Right cardiac atrium (tissue), 5 donors: ENCODE measurements at regions of chr11 and their contacts with region 1.

Region 1: DNA sequence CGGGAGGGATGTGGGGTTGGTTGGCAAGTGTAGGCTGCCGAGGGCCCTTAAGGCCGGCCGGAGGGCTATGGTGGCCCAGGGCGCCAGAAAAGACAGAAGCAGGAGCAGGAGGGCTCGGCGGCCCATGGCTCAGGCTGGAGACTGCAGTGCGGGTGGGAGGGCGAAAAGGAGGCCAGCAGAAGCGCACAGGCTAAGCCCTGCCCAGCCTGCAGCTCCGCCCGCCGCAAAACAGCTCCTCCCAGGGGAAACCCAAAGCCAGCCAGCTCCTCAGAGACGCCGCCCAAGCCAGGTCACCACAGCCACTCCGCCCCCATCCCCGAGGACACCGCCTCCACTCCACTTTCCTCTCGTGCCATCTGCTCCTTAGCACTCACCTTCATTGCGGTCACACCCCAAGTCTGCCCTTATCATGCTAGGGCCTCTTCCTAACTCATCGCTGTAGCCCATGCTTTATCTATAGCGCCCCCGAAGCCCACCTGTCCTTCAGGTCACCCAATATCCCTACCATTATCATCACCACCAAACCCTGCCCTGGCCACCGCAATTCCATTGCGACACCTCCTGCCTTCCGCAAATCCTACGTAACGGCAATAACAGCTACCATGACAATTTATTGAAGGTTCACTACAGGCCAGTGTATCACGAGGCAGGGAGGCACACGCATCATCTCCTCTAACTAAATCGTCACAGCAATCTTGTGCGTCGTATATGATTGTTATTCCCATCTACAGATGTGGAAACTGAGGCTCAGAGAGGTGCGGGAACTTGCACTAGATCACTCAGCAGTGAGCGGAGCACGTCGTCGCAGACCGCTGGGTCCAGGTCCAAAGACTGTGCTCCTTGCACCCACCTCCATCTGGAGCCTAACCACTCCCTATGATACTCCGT is at the start of gene PRCP:
- DNase-seq: peak; percentile 94 to 97 (median 97)
- ATAC-seq: peak; percentile 96
- H3K4me3 ChIP-seq: peak within 1 kb of the TSS; percentile 82
- H3K27ac ChIP-seq: peak within 1 kb of the TSS; percentile 87
- H3K4me1 ChIP-seq: no peaks in the 10 kb centered on the region
- H3K27me3 ChIP-seq: no peaks in the 10 kb centered on the region
- total RNA-seq, gene PRCP: 83.2 to 100 (median 84.9) TPM

Region 2: GRCh38 chr11:82775736-82776346 is 124.7 kb before region 1 on chr11:
- intact Hi-C with region 1: no loop called
- DNase-seq: no peak
- ATAC-seq: no peak
- H3K4me3 ChIP-seq: no peak overlapping the region
- H3K27ac ChIP-seq: no peak overlapping the region
- H3K4me1 ChIP-seq: no peaks in the 10 kb centered on the region
- H3K27me3 ChIP-seq: no peaks in the 10 kb centered on the region

Region 3: DNA sequence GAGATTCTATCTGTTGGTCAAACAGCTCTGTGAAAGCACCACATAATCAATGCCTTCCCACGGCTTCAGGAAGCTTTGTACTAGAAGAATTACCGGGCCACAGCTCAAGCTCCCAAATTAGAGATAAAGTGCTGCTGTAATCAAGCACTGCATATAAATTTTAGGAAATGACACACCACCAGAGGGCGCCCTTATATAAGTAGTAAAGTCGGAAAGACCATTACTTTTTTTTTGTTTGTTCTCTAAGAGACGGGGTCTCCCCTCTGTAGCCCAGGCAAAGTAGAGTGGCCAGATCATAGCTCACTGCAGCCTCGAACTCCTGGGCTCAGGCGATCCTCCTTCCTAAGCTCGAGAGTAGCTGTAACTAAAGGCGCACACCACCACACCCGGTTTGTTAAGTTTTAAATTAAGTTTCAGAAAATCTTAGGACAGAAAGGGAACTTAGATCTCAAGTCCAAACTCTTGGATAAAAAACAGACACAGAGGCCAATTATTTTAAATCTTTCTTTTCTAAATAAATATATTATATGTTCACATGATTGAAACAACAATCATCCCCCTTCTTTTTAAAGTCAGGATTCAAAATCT is 32.9 kb before region 1 on chr11:
- intact Hi-C with region 1: loop called in 2 of 4 experiments (anchors 5 kb)
- DNase-seq: peak; percentile 52 to 86 (median 69)
- ATAC-seq: peak; percentile 44 to 65
- H3K4me3 ChIP-seq: peak overlapping the region; percentile 43
- H3K27ac ChIP-seq: no peak overlapping the region
- H3K4me1 ChIP-seq: peaks cover 6% of the 10 kb centered on the region
- H3K27me3 ChIP-seq: no peaks in the 10 kb centered on the region

Region 4: DNA sequence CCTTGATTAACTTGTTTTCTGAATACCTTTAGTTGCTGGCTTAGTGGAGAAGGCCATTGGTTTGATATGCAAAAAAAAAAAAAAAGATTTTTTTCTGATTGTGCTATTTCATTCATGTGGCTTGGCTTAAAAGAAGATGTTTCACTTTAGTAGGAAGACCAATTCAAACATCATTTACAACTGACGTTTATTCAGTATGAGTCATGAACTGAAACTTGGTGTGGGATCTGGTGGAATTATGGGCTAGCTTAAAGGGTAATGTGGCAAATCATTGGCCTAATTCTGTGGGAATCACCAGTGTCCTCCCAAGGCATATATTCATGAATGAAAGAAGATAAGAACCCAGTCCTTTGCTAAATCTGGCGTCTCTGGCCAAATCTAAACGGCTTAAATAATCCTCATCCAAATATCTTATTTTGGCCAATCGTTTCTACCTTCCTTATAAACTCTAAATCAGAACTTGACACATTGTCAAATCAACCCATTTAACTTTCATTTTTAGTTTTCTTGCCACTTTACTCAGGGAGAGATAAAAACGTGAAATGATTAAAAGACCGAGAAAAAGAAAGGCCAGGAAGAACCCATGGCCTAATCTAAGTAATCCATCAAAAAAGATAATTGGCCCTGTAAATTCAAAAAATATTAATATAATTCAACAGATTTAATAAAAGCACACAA is 78.0 kb after region 1 on chr11:
- intact Hi-C with region 1: no loop called
- DNase-seq: no peak
- ATAC-seq: no peak
- H3K4me3 ChIP-seq: no peak overlapping the region
- H3K27ac ChIP-seq: no peak overlapping the region
- H3K4me1 ChIP-seq: no peaks in the 10 kb centered on the region
- H3K27me3 ChIP-seq: no peaks in the 10 kb centered on the region

Region 5: DNA sequence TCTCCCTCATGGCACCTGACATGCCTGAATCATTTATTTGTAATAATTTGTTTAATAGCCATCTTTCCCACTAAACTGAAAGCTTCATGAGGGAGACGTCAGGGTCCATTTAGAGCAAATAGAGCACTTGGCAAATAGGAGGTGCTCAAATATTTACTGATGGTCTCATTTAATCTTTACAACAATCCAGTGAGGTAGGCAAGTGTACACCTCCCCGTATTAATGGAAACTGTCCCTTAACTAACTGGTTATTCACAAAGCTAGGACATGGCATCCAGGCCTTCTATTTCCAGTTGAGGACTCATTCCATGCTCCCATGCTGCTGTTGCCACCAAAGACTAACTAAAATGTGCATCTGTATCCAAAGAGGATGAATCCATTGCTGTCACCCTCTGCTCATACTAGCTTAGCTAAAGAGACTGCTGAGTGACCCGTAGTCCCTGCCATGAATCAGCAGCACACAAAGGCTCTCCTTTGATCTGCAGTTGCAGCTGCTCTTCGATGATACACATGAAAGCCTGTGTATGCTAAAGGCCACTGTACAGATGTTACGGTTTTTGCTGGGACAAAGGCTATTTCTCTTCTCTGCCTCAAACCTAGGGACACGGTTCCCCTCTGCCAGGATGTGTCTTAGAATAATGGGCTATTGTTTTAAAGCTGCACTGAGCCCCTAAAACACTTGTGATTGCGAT is 88.6 kb after region 1 on chr11:
- intact Hi-C with region 1: no loop called
- DNase-seq: no peak
- ATAC-seq: no peak
- H3K4me3 ChIP-seq: no peak overlapping the region
- H3K27ac ChIP-seq: no peak overlapping the region
- H3K4me1 ChIP-seq: peaks cover 4% of the 10 kb centered on the region
- H3K27me3 ChIP-seq: no peaks in the 10 kb centered on the region

Region 6: GRCh38 chr11:83162377-83162776 is 261.9 kb after region 1 on chr11:
- intact Hi-C with region 1: loop called in 1 of 4 experiments (anchors 10 kb)
- DNase-seq: no peak
- ATAC-seq: no peak
- H3K4me3 ChIP-seq: no peak overlapping the region
- H3K27ac ChIP-seq: no peak overlapping the region
- H3K4me1 ChIP-seq: peaks cover 3% of the 10 kb centered on the region
- H3K27me3 ChIP-seq: no peaks in the 10 kb centered on the region

Region 7: DNA sequence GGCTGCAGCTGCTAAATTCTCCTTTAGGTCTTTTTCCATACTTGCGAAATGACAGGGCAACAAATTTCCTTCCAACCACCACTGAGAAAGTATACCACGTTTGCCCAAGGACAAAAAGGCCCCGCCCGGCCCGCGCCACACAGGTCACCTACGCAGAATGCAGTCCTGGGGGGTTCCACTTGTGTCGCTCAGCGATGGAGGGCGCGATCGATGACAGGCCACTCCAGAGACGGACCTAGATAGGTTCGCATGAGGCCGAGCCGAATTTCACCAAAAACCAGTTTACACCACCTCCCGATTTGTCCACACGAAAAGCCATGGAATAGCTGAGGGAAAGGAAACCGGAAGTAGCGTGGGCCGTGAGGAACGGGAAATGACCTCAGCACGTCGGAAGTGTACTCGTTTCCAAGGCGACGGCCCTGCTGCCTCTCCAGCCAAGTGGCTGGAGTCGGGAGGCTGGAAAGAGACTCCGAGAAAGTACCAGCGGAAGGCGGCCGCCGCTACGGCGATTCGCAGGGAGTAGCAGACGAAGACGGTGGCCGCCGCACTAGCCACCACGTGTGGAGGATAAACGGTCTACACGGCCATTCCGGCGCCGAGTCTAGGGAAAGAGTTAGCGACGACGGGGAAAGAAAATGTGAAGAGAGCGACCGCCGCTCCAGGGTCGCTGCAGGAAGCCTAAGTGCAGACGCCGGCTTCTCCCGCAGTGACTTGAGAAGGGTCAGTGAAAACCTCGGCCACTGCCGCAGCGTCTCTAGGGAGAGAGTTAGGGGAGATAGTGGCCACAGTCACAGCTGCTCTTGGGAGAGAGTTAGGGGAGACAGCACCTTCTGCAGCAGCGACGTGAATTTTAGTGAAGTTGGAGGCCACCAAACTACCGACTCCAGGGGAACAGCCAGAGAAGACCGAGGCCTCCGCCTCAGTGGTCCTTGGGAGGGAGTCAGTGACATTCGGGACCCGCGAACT is 293.1 kb after region 1 on chr11 and contains the start of gene ANKRD42:
- intact Hi-C with region 1: loop called in 2 of 4 experiments (anchors 10 kb)
- DNase-seq: peak; percentile 94 to 97 (median 95)
- ATAC-seq: peak; percentile 97 to 98
- H3K4me3 ChIP-seq: peak within 1 kb of the TSS; percentile 91
- H3K27ac ChIP-seq: peak within 1 kb of the TSS; percentile 91
- H3K4me1 ChIP-seq: no peaks in the 10 kb centered on the region
- H3K27me3 ChIP-seq: no peaks in the 10 kb centered on the region
- total RNA-seq, gene ANKRD42: 7.9 to 9.7 (median 9.0) TPM

Region 8: GRCh38 chr11:83249972-83250593 is 349.6 kb after region 1 on chr11:
- intact Hi-C with region 1: loop called (anchors 5 to 10 kb)
- DNase-seq: no peak
- ATAC-seq: peak in 1 of 2 donors; percentile 43
- H3K4me3 ChIP-seq: no peak overlapping the region
- H3K27ac ChIP-seq: no peak overlapping the region
- H3K4me1 ChIP-seq: no peaks in the 10 kb centered on the region
- H3K27me3 ChIP-seq: no peaks in the 10 kb centered on the region